GM12878 (cell line): ENCODE measurements at regions of chr4 and their contacts with region 1.

Region 1: GRCh38 chr4:38179690-38180377 is 219.6 kb downstream of the PTTG2 start:
- DNase-seq: peak; percentile 56
- ATAC-seq: peak; percentile 85
- H3K4me3 ChIP-seq: no peak overlapping the region
- H3K27ac ChIP-seq: no peak overlapping the region
- H3K4me1 ChIP-seq: peaks cover 39% of the 10 kb centered on the region
- H3K27me3 ChIP-seq: no peaks in the 10 kb centered on the region
- CTCF ChIP-seq: peak; percentile 76 to 94 (median 88)
- EP300 ChIP-seq: no peak
- POLR2A ChIP-seq: no peak
- RAD21 ChIP-seq: peak; percentile 98

Region 2: GRCh38 chr4:36900446-36900987 is 1279.3 kb before region 1 on chr4:
- CTCF ChIA-PET with region 1: no interaction called
- POLR2A ChIA-PET with region 1: no interaction called
- RAD21 ChIA-PET with region 1: no interaction called
- SMC1A ChIA-PET with region 1: no interaction called
- in situ Hi-C with region 1: no loop called
- intact Hi-C with region 1: no loop called
- DNase-seq: no peak
- ATAC-seq: no peak
- H3K4me3 ChIP-seq: no peak overlapping the region
- H3K27ac ChIP-seq: no peak overlapping the region
- H3K4me1 ChIP-seq: no peaks in the 10 kb centered on the region
- H3K27me3 ChIP-seq: no peaks in the 10 kb centered on the region
- CTCF ChIP-seq: no peak
- EP300 ChIP-seq: no peak
- POLR2A ChIP-seq: no peak
- RAD21 ChIP-seq: no peak

Region 3: GRCh38 chr4:37615059-37615719 is 564.6 kb before region 1 on chr4:
- CTCF ChIA-PET with region 1: no interaction called
- POLR2A ChIA-PET with region 1: no interaction called
- RAD21 ChIA-PET with region 1: no interaction called
- SMC1A ChIA-PET with region 1: no interaction called
- in situ Hi-C with region 1: no loop called
- intact Hi-C with region 1: no loop called
- DNase-seq: no peak
- ATAC-seq: no peak
- H3K4me3 ChIP-seq: no peak overlapping the region
- H3K27ac ChIP-seq: no peak overlapping the region
- H3K4me1 ChIP-seq: no peaks in the 10 kb centered on the region
- H3K27me3 ChIP-seq: no peaks in the 10 kb centered on the region
- CTCF ChIP-seq: no peak
- EP300 ChIP-seq: no peak
- POLR2A ChIP-seq: no peak
- RAD21 ChIP-seq: no peak

Region 4: GRCh38 chr4:38062088-38062893 is 117.5 kb before region 1 on chr4:
- CTCF ChIA-PET with region 1: interaction called, 202 read pairs
- POLR2A ChIA-PET with region 1: interaction called, 3 read pairs
- RAD21 ChIA-PET with region 1: interaction called, 173 read pairs
- SMC1A ChIA-PET with region 1: interaction called, 40 read pairs
- in situ Hi-C with region 1: no loop called
- intact Hi-C with region 1: loop called (anchors 1 kb)
- DNase-seq: no peak
- ATAC-seq: peak; percentile 93
- H3K4me3 ChIP-seq: no peak overlapping the region
- H3K27ac ChIP-seq: peak overlapping the region; percentile 6
- H3K4me1 ChIP-seq: peaks cover 3% of the 10 kb centered on the region; the same call in 1 of the 2 replicates
- H3K27me3 ChIP-seq: no peaks in the 10 kb centered on the region
- CTCF ChIP-seq: peak; percentile 67 to 85 (median 80)
- EP300 ChIP-seq: no peak
- POLR2A ChIP-seq: no peak
- RAD21 ChIP-seq: peak; percentile 95

Region 5: GRCh38 chr4:38160487-38161207 is 19.2 kb before region 1 on chr4:
- CTCF ChIA-PET with region 1: interaction called, 35 read pairs
- POLR2A ChIA-PET with region 1: no interaction called
- RAD21 ChIA-PET with region 1: interaction called, 41 read pairs
- SMC1A ChIA-PET with region 1: interaction called, 23 read pairs
- in situ Hi-C with region 1: no loop called
- intact Hi-C with region 1: no loop called
- DNase-seq: peak; percentile 69
- ATAC-seq: peak; percentile 91
- H3K4me3 ChIP-seq: no peak overlapping the region
- H3K27ac ChIP-seq: peak overlapping the region; percentile 57
- H3K4me1 ChIP-seq: peaks cover 10% of the 10 kb centered on the region
- H3K27me3 ChIP-seq: no peaks in the 10 kb centered on the region
- CTCF ChIP-seq: no peak
- EP300 ChIP-seq: peak; percentile 87 to 96; a peak in 3 of 4 replicates
- POLR2A ChIP-seq: no peak
- RAD21 ChIP-seq: peak; percentile 16; the same call in 1 of the 2 replicates

Region 6: GRCh38 chr4:38310446-38311043 is 130.7 kb after region 1 on chr4:
- CTCF ChIA-PET with region 1: interaction called, 27 read pairs
- POLR2A ChIA-PET with region 1: no interaction called
- RAD21 ChIA-PET with region 1: interaction called, 15 read pairs
- SMC1A ChIA-PET with region 1: interaction called, 36 read pairs
- in situ Hi-C with region 1: loop called (anchors 5 kb)
- intact Hi-C with region 1: no loop called
- DNase-seq: peak; percentile 97
- ATAC-seq: peak; percentile 91
- H3K4me3 ChIP-seq: no peak overlapping the region
- H3K27ac ChIP-seq: peak overlapping the region; percentile 77
- H3K4me1 ChIP-seq: peaks cover 61% of the 10 kb centered on the region
- H3K27me3 ChIP-seq: no peaks in the 10 kb centered on the region
- CTCF ChIP-seq: no peak
- EP300 ChIP-seq: peak; percentile 84 to 98
- POLR2A ChIP-seq: peak; percentile 39; the same call in 1 of the 2 replicates
- RAD21 ChIP-seq: peak; percentile 31

Region 7: DNA sequence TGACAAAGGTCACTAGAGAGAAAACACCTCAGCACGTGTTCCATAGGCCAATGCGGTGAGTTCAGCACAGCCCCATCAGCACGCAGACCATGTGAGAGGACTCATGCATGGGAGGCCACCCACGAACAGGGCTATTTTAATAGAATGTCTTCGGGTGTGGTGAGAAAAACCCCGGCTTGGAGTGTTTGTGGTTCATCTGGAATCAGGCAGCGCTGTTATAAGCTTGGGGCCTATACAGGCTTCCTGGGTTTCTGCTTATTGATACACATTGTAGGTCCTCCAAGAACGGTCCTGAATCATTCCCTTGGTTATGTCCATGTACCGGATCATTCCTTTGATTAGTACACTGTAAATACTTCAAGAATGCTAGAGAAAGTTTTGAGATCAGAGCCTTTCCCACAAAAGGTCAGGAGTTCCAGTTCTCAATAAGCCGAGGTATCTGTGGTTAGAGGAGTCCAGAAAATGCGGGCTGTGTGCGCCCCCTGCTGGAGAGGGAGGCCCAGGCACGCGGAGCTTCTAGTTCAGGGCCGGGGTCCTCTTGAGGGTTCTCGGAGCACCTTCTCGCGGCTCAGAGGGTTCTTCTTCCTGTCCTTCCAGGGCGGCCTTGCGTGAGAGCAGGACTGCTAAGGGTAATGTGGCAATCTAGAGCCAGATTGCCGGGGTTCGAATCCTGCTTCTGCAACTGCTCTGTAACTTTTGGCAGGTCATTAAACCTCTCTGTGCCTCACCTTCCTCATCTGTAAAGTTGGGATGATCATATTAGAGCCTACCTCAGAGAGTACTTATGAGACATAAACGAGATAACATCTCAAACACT is 551.2 kb after region 1 on chr4:
- CTCF ChIA-PET with region 1: interaction called, 65 read pairs
- POLR2A ChIA-PET with region 1: interaction called, 5 read pairs
- RAD21 ChIA-PET with region 1: interaction called, 66 read pairs
- SMC1A ChIA-PET with region 1: interaction called, 34 read pairs
- in situ Hi-C with region 1: loop called (anchors 5 kb)
- intact Hi-C with region 1: loop called (anchors 1 kb)
- DNase-seq: peak; percentile 87
- ATAC-seq: peak; percentile 97
- H3K4me3 ChIP-seq: no peak overlapping the region
- H3K27ac ChIP-seq: peak overlapping the region; percentile 57
- H3K4me1 ChIP-seq: peaks cover 16% of the 10 kb centered on the region
- H3K27me3 ChIP-seq: no peaks in the 10 kb centered on the region; a peak in 1 of 4 replicates
- CTCF ChIP-seq: peak; percentile 69 to 96 (median 89)
- EP300 ChIP-seq: peak; percentile 75 to 91; a peak in 3 of 4 replicates
- POLR2A ChIP-seq: no peak
- RAD21 ChIP-seq: peak; percentile 97

Region 8: DNA sequence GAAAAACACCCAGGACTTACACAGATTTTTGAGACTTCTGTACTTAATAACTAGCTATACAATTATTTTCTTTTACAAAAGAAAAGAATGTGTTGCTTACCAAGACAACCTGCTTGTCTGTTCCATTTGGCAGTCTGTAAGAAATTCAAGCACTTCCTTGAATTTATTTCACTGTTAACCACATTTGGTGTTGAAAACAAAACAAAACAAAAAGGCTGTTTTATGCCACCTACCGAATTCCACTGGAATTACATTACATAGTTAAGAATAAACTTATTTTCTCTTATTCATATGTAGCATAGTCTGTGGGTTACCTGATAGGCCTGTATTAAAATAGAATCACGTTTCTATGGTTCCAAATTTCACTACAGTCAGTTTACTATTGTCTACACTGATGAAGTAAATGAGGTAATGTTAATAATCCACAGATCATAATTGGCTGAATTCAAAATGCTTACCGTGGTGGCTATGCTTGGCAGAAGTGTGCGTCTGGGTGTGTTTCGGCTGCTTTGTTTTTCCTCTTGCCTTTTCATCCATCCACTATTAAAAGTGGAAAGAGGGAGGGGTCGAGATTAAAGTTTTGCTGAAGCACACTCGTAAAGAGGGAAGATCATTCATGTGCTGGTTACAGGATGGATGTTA is 624.9 kb after region 1 on chr4 and contains the start of gene TLR1:
- CTCF ChIA-PET with region 1: interaction called, 16 read pairs
- POLR2A ChIA-PET with region 1: interaction called, 3 read pairs
- RAD21 ChIA-PET with region 1: interaction called, 3 read pairs
- SMC1A ChIA-PET with region 1: interaction called, 12 read pairs
- in situ Hi-C with region 1: no loop called
- intact Hi-C with region 1: no loop called
- DNase-seq: peak; percentile 62
- ATAC-seq: peak; percentile 67
- H3K4me3 ChIP-seq: peak within 1 kb of the TSS; percentile 41
- H3K27ac ChIP-seq: peak within 1 kb of the TSS; percentile 86
- H3K4me1 ChIP-seq: peaks cover 20% of the 10 kb centered on the region
- H3K27me3 ChIP-seq: no peaks in the 10 kb centered on the region
- CTCF ChIP-seq: peak; percentile 22 to 47 (median 38); a peak in 5 of 6 replicates
- EP300 ChIP-seq: no peak
- POLR2A ChIP-seq: no peak
- RAD21 ChIP-seq: peak; percentile 64
- polyA plus RNA-seq, gene TLR1: 9.3 to 9.5 TPM